ENCODE measurements at regions of chr7 and their contacts with region 1.

Region 1: DNA sequence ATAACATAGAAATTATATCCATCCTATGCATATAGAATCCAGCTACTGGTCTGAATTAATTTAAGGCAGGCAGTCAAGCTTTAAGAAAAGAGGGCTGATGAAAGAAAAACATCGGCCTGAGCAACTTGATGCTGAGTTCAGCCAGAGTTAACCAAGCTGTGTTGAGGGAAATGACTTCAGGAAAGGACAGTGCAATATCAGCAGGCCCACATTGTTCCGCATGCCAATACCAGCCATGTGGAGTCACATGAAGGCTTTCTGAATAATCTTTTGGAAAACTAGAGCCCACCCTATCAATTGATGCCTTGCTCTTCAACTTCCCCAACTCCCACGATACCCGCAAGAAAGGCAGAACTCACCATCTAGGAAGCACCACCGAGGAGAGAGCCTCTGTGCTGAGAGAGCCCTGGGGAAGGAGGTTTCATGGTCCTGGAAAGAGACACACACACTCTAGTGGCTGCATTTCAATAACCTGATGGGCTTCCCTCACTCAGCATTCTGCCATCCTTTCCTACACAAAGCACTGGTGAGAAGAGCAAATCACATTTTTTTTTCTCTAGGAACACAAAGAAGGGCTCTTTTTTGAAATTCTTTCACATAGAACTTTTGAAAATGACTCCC is 125.8 kb upstream of the PTN start:
- DNase-seq: no peak
- ATAC-seq: no peak

Region 2: DNA sequence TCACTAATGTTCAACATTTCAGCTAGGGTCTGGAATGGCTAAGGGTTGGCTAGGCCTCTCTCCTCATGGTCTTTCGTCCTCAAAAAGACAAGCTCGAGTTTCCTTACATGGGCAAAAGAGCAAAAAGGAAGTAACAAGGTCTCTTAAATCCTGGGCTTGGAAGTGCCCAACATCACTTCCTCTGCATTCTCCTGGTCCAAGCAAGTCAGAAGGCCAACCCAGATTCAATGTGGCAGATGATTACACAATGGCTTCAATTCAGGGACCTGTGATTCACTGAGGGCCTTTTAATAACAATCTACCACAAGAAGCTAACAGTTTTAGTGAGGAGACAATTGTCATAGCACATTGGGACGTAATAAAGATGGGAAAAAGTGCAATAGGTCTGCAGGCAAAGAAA is 1916.0 kb before region 1 on chr7:
- intact Hi-C with region 1: loop called (anchors 5 kb)
- DNase-seq: no peak
- ATAC-seq: no peak